ENCODE measurements at regions of chr13 and their contacts with region 1.

Region 1: DNA sequence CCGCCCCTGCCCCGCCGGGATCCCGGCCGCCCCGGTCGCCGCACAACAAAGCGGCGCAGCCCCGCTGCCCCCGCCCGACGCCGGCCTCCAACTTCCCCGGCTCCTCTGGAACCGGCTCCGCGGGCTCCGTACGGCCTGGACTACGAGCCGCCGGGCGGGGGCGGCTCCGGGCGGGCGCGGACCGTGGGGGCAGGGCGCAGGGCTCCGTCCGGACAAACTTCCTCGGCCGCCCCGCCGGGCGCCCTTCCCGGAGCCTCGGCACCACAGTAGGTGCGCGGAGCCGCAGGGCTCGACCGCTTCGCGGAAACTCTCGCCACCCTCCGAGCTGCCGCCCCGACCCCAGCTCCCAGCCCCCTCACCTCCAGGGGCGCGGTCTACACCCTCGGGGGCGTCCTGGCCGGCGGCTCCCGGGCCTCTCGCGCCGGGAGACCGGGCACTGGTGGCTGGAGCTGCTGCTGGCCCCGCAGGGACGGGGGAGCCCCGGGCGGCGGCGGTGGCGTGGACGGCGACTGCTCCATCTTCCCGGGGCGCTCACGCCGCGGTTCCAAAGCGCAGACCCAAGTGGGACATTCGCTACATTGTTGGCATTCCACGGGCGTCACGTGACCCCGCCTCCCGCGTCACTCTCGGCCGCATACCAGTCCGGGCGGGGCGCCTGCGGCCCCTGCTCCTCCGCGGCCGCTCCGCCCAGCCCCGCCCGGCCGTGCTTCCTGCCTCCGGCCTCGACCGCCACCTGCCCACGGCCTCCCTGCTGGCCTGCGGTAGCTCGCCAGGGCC is at the start of gene LATS2:
- DNase-seq: peak; percentile 80 to 96
- H3K4me3 ChIP-seq: peak within 1 kb of the TSS; percentile 83 to 97 (median 88)
- H3K27ac ChIP-seq: peak within 1 kb of the TSS; percentile 97
- H3K4me1 ChIP-seq: peaks cover 0 to 5% (median 5%) of the 10 kb centered on the region in 4 experiments; a peak in 3 of 7 replicates
- H3K27me3 ChIP-seq: no peaks in the 10 kb centered on the region
- CTCF ChIP-seq: 0 out of 4 replicates have a peak, but pooled peaks of 1 of the 3 experiments have one; percentile 13
- EP300 ChIP-seq: peak in 1 of 2 experiments; percentile 93; a peak in 1 of 3 replicates
- POLR2A ChIP-seq: peak; percentile 90 to 92
- RAD21 ChIP-seq: peak; percentile 21 to 41; a peak in 2 of 4 replicates
- total RNA-seq, gene LATS2: 26.2 and 26.5 TPM in 2 replicates

Region 2: GRCh38 chr13:21022056-21022979 is 38.9 kb before region 1 on chr13:
- CTCF ChIA-PET with region 1: interaction called, 3 read pairs
- POLR2A ChIA-PET with region 1: interaction called, 15 read pairs
- DNase-seq: no peak
- H3K4me3 ChIP-seq: no peak overlapping the region
- H3K27ac ChIP-seq: no peak overlapping the region
- H3K4me1 ChIP-seq: peaks cover 0 to 4% (median 2%) of the 10 kb centered on the region in 4 experiments; a peak in 2 of 7 replicates
- H3K27me3 ChIP-seq: no peaks in the 10 kb centered on the region
- CTCF ChIP-seq: no peak
- EP300 ChIP-seq: no peak
- POLR2A ChIP-seq: no peak
- RAD21 ChIP-seq: no peak

Region 3: GRCh38 chr13:21043898-21044297 is 17.3 kb before region 1 on chr13:
- CTCF ChIA-PET with region 1: no interaction called
- POLR2A ChIA-PET with region 1: interaction called, 29 read pairs
- DNase-seq: no peak
- H3K4me3 ChIP-seq: no peak overlapping the region
- H3K27ac ChIP-seq: no peak overlapping the region
- H3K4me1 ChIP-seq: peaks cover 0 to 5% (median 3%) of the 10 kb centered on the region in 4 experiments; a peak in 4 of 7 replicates
- H3K27me3 ChIP-seq: no peaks in the 10 kb centered on the region
- CTCF ChIP-seq: no peak
- EP300 ChIP-seq: no peak
- POLR2A ChIP-seq: no peak
- RAD21 ChIP-seq: no peak

Region 4: DNA sequence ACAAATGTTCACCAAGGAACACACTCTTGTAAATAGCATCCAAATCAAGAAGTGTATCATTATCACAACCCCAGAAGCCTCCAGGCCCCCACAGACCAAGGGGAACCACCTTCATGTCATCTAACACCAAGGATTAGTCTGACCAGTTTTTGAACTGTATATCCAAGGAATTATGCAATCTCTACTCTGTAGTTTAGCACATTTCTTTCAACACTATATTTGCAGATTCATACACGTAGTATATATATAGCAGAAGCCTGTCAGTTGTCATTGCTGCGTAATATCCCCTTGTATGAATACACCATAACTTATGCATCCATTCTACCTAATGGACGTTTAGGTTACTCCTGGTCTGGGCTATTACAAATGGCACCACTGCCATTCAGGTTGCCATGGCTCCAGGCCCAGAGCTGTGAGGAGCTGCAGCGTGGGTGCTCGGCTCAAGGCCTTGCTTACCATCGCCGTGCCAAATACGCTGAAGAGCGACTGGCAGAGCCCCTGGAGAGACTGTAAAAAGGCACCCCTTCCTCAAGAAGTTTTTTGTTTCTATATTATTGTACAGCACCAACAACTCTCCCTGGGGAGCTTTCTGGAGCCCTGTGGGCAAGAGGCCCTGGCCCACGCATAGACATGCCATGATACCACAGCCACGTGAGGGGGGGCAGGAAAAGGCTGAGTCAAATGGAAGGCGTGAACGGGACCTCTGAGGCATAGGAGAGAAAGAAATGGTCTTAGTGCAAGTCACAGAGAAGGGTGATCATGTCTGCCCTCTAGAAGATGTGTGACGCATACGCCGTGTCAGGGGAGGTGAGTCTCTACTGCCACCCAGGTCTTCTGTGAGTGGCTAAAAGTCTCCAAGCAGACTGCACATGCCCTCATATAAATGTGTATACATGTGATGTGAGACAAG is 10.6 kb before region 1 on chr13:
- CTCF ChIA-PET with region 1: interaction called, 3 read pairs
- POLR2A ChIA-PET with region 1: interaction called, 29 read pairs
- DNase-seq: peak in 1 of 2 experiments; percentile 38
- H3K4me3 ChIP-seq: no peak overlapping the region
- H3K27ac ChIP-seq: no peak overlapping the region
- H3K4me1 ChIP-seq: peaks cover 5 to 11% (median 6%) of the 10 kb centered on the region in 4 experiments; a peak in 6 of 7 replicates
- H3K27me3 ChIP-seq: no peaks in the 10 kb centered on the region
- CTCF ChIP-seq: no peak
- EP300 ChIP-seq: no peak
- POLR2A ChIP-seq: no peak
- RAD21 ChIP-seq: no peak

Region 5: DNA sequence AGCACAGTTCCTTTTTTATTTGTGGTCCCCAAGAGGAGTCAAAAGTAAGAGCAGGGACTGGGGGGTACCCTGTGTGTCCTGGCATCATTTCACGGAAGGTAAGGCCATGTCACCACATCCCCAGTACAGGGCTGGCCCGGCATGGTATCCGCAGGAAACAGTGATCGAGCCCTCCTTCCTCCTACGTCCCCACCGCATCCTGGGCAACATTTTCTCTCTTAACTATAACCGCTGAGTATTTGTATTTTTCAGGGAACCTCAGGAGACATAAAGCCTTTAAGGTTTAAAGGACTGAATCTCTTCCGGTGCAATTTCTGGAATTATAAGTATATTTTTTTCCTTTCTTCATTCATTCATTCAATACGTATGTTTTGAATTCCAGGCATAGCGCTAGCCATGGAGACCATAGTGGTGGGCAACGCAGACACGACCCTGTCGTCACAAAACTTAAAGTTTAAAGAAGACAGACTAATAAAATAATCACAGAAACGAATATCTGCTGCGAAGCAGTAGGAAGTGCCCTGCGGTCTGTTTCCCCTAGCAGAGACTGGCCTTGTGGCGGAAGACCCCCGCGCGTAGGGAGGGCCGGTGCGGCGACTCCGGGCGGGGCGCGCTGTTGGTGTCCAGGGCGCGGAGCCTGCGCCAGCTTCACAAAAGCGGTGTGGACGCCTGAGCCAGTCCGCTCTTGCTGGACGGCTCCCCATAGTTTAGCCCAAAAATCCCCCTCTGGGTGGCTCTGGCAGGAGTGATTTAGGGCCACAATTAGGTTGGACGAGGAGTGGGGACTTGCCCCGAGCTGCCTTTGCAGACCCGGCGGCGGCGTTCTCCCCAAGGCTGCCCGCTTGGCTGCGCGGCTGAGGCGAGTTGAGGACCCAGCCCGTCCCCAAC is 14.1 kb after region 1 on chr13:
- CTCF ChIA-PET with region 1: interaction called, 5 read pairs
- POLR2A ChIA-PET with region 1: interaction called, 45 read pairs
- DNase-seq: peak in 1 of 2 experiments; percentile 82
- H3K4me3 ChIP-seq: peak overlapping the region; percentile 62 to 68 (median 65)
- H3K27ac ChIP-seq: peak overlapping the region; percentile 71; the same call in 1 of the 2 replicates
- H3K4me1 ChIP-seq: peaks cover 3 to 9% (median 5%) of the 10 kb centered on the region in 4 experiments; a peak in 5 of 7 replicates
- H3K27me3 ChIP-seq: no peaks in the 10 kb centered on the region; a peak in 1 of 7 replicates
- CTCF ChIP-seq: no peak
- EP300 ChIP-seq: no peak
- POLR2A ChIP-seq: peak in 1 of 2 experiments; percentile 73; a peak in 2 of 3 replicates
- RAD21 ChIP-seq: no peak; a peak in 1 of 4 replicates

Region 6: DNA sequence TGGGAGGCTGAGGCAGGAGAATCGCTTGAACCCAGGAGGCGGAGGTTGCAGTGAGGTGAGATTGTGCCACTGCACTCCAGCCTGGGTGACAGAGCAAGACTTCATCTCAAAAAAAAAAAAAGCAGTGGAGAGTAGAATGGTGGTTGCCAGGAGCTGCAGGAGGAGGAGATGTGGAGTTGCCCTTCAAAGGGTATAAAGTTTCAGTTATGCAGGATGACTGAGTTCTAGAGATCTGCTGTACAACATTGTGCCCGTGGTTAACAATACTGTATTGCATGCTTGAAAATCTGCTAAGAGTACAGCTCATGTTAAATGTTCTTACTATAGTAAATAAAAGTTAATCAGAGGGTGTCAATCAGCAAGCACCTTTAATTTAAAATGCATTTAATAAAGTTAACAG is 28.7 kb after region 1 on chr13:
- CTCF ChIA-PET with region 1: no interaction called
- POLR2A ChIA-PET with region 1: no interaction called
- DNase-seq: no peak
- H3K4me3 ChIP-seq: no peak overlapping the region
- H3K27ac ChIP-seq: no peak overlapping the region
- H3K4me1 ChIP-seq: no peaks in the 10 kb centered on the region
- H3K27me3 ChIP-seq: no peaks in the 10 kb centered on the region
- CTCF ChIP-seq: no peak
- EP300 ChIP-seq: no peak
- POLR2A ChIP-seq: no peak
- RAD21 ChIP-seq: no peak

Region 7: DNA sequence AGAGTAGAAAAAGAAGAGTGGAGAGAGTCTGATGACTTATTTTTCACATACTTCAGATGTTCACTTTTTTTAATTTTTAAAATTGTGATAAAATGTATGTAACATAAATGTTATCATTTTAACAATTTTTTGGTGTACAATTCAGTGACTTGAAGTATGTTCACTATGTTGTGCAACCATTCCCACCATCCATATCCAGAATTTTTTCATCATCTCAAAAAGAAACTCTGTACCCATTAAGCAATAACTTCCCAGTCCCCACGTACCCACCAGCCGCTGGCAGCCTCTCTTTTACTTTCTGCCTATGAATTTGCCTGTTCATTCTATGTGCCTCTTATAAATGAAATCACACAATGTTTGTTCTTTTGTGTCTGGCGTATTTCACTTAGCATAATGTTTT is 71.9 kb after region 1 on chr13:
- CTCF ChIA-PET with region 1: no interaction called
- POLR2A ChIA-PET with region 1: interaction called, 10 read pairs
- DNase-seq: no peak
- H3K4me3 ChIP-seq: no peak overlapping the region
- H3K27ac ChIP-seq: no peak overlapping the region
- H3K4me1 ChIP-seq: peaks cover 0 to 2% (median 0%) of the 10 kb centered on the region in 4 experiments; a peak in 1 of 7 replicates
- H3K27me3 ChIP-seq: no peaks in the 10 kb centered on the region
- CTCF ChIP-seq: no peak
- EP300 ChIP-seq: no peak
- POLR2A ChIP-seq: no peak
- RAD21 ChIP-seq: no peak

Region 8: GRCh38 chr13:21176220-21176982 is 115.2 kb after region 1 on chr13 and contains the starts of genes MRPL57 and SKA3:
- CTCF ChIA-PET with region 1: no interaction called
- POLR2A ChIA-PET with region 1: interaction called, 22 read pairs
- DNase-seq: peak; percentile 95 to 97
- H3K4me3 ChIP-seq: peak within 1 kb of the TSS; percentile 63 to 89 (median 82)
- H3K27ac ChIP-seq: peak within 1 kb of the TSS; percentile 95
- H3K4me1 ChIP-seq: peaks cover 0 to 4% (median 0%) of the 10 kb centered on the region in 4 experiments; a peak in 2 of 7 replicates
- H3K27me3 ChIP-seq: no peaks in the 10 kb centered on the region
- CTCF ChIP-seq: no peak
- EP300 ChIP-seq: no peak
- POLR2A ChIP-seq: peak; percentile 99 to 100
- RAD21 ChIP-seq: no peak; a peak in 1 of 4 replicates
- total RNA-seq, gene MRPL57: 34.1 and 34.5 TPM in 2 replicates
- total RNA-seq, gene SKA3: 60.1 and 63.7 TPM in 2 replicates